ENCODE measurements at regions of chr3 and their contacts with region 1.

Region 1: GRCh38 chr3:128740621-128741020 is 14.6 kb downstream of the RAB7A start:
- DNase-seq: no peak
- ATAC-seq: no peak
- H3K4me3 ChIP-seq: no peak overlapping the region
- H3K27ac ChIP-seq: peak overlapping the region in 2 of 4 donors; percentile 20 to 26
- H3K4me1 ChIP-seq: peaks cover 23 to 43% of the 10 kb centered on the region in 2 donors
- H3K27me3 ChIP-seq: no peaks in the 10 kb centered on the region
- CTCF ChIP-seq: no peak
- POLR2A ChIP-seq: no peak

Region 2: DNA sequence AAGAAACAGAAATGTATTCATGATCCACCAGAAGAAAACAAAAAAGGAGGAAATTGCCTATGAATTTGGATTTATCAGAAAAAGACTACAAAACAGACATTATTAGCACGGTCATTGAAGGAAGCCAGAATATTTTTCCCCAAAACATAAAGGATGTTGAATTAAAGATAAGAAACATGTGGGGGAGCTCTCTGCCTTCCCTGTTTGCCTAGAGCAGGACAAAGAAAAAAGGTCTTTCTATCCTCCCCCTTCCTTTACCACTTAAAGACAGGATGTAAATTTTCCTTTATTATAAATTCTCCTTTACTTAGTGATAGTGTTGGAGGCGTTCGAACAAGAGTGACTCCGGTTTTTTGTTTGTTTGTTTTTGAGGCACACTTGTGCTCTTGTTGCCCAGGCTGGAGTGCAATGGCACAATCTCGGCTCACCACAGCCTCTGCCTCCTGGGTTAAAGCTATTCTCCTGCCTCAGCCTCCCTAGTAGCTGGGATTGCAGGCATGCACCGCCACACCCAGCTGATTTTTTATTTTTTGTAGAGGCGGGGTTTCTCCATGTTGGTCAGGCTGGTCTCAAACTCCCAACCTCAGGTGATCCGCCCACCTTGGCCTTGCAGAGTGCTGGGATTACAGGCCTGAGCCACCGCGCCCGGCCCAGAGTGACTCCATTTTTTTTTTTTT is 75.1 kb before region 1 on chr3:
- in situ Hi-C with region 1: no loop called
- intact Hi-C with region 1: no loop called
- DNase-seq: no peak
- ATAC-seq: no peak
- H3K4me3 ChIP-seq: no peak overlapping the region
- H3K27ac ChIP-seq: no peak overlapping the region
- H3K4me1 ChIP-seq: no peaks in the 10 kb centered on the region
- H3K27me3 ChIP-seq: no peaks in the 10 kb centered on the region
- CTCF ChIP-seq: no peak
- POLR2A ChIP-seq: no peak

Region 3: GRCh38 chr3:128753715-128754114 is 13.1 kb after region 1 on chr3:
- in situ Hi-C with region 1: no loop called
- intact Hi-C with region 1: loop called (anchors 2 kb)
- DNase-seq: peak in 1 of 2 donors; percentile 45
- ATAC-seq: peak; percentile 39 to 86
- H3K4me3 ChIP-seq: no peak overlapping the region
- H3K27ac ChIP-seq: peak overlapping the region; percentile 56 to 94 (median 60)
- H3K4me1 ChIP-seq: peaks cover 64 to 79% of the 10 kb centered on the region in 2 donors
- H3K27me3 ChIP-seq: no peaks in the 10 kb centered on the region
- CTCF ChIP-seq: no peak
- POLR2A ChIP-seq: no peak

Region 4: GRCh38 chr3:128787256-128788240 is 46.9 kb after region 1 on chr3:
- in situ Hi-C with region 1: no loop called
- intact Hi-C with region 1: no loop called
- DNase-seq: no peak
- ATAC-seq: peak in 1 of 2 donors; percentile 27
- H3K4me3 ChIP-seq: no peak overlapping the region
- H3K27ac ChIP-seq: peak overlapping the region; percentile 80 to 99 (median 96)
- H3K4me1 ChIP-seq: peaks cover 69 to 87% of the 10 kb centered on the region in 2 donors
- H3K27me3 ChIP-seq: no peaks in the 10 kb centered on the region
- CTCF ChIP-seq: peak in 3 of 5 experiments; percentile 15 to 42 (median 33)
- POLR2A ChIP-seq: no peak

Measured in gastrocnemius medialis (tissue), 4 donors.